ENCODE measurements at regions of chr2 and their contacts with region 1.

Region 1: GRCh38 chr2:71923887-71924533 is 223.7 kb downstream of the CYP26B1 start:
- DNase-seq: peak; percentile 65 to 73 (median 69)
- ATAC-seq: no peak
- H3K4me3 ChIP-seq: no peak overlapping the region
- H3K27ac ChIP-seq: no peak overlapping the region
- H3K4me1 ChIP-seq: no peaks in the 10 kb centered on the region
- H3K27me3 ChIP-seq: no peaks in the 10 kb centered on the region
- CTCF ChIP-seq: peak; percentile 56 to 88 (median 77)
- POLR2A ChIP-seq: no peak

Region 2: GRCh38 chr2:72062336-72062735 is 138.3 kb after region 1 on chr2:
- intact Hi-C with region 1: no loop called
- DNase-seq: no peak
- ATAC-seq: no peak
- H3K4me3 ChIP-seq: no peak overlapping the region
- H3K27ac ChIP-seq: no peak overlapping the region
- H3K4me1 ChIP-seq: no peaks in the 10 kb centered on the region
- H3K27me3 ChIP-seq: no peaks in the 10 kb centered on the region
- CTCF ChIP-seq: no peak
- POLR2A ChIP-seq: no peak

Region 3: DNA sequence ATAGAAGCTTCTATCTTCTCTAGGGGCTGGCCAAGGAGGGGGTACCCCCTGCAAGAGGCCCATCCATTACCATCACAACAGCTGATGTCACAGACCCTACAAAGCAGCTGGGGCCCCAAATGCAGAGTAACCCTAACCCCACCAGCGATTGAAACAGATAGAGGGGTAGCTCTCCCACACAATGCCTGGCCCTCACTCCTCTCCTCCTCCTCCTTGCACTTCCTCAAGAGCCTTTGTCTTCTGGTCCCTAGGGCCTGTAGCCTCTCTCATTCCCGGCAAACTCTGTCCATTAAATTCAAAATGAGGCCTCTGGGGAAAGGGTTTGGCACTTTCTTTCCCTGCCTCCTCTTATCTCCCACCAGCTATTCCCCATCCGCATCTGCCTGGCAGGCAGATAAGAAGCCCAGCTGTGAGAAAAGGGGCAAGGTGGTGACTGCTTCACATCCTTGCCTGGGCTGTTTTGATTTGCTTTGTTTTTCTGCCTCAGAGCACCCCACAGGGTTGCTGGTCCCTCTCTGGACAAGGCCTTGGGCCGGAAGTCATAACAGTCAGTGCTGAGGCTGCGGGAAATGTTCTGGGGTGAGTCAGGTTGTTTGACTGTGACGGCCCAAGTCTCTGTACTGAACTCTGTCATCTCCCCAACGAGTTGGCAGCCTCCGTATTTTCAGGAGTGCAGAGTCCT is 249.8 kb after region 1 on chr2:
- intact Hi-C with region 1: no loop called
- DNase-seq: no peak
- ATAC-seq: no peak
- H3K4me3 ChIP-seq: no peak overlapping the region
- H3K27ac ChIP-seq: no peak overlapping the region
- H3K4me1 ChIP-seq: no peaks in the 10 kb centered on the region
- H3K27me3 ChIP-seq: no peaks in the 10 kb centered on the region
- CTCF ChIP-seq: no peak
- POLR2A ChIP-seq: no peak

Region 4: DNA sequence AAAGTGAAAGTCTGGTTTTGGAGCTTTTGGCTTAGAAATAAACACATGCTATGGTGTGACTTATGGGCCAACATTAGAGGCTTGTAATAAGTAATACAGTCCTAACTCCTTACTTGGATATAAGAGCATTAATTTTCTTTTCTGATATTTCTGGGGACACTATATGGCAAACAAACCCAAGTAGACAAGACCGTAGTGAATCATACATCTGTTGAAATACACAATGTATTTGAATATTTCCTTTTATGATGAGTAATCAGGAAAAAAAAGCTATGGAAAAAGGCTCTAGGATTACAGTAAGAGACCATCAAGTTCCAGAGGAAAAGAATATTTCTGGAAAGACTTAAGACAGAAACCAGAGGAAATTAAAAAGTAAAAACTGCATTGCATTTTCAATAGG is 369.6 kb after region 1 on chr2:
- intact Hi-C with region 1: no loop called
- DNase-seq: no peak
- ATAC-seq: no peak
- H3K4me3 ChIP-seq: no peak overlapping the region
- H3K27ac ChIP-seq: no peak overlapping the region
- H3K4me1 ChIP-seq: no peaks in the 10 kb centered on the region
- H3K27me3 ChIP-seq: no peaks in the 10 kb centered on the region
- CTCF ChIP-seq: no peak
- POLR2A ChIP-seq: no peak

Region 5: GRCh38 chr2:72745679-72746368 is 821.8 kb after region 1 on chr2:
- intact Hi-C with region 1: loop called (anchors 10 kb)
- DNase-seq: peak in 1 of 4 donors; percentile 17
- ATAC-seq: no peak
- H3K4me3 ChIP-seq: no peak overlapping the region
- H3K27ac ChIP-seq: no peak overlapping the region
- H3K4me1 ChIP-seq: peaks cover 8% of the 10 kb centered on the region
- H3K27me3 ChIP-seq: no peaks in the 10 kb centered on the region
- CTCF ChIP-seq: peak; percentile 47 to 79 (median 73)
- POLR2A ChIP-seq: no peak

Measured in body of pancreas (tissue), 4 donors.